ENCODE measurements at regions of chr5 and their contacts with region 1.

Region 1: GRCh38 chr5:17216176-17216973 is 1.1 kb upstream of the BASP1 start:
- DNase-seq: peak in 1 of 2 donors; percentile 84
- H3K4me3 ChIP-seq: peak overlapping the region; percentile 73 to 82
- H3K27ac ChIP-seq: peak overlapping the region; percentile 61 to 93
- H3K4me1 ChIP-seq: peaks cover 0 to 2% of the 10 kb centered on the region in 2 donors
- H3K27me3 ChIP-seq: no peaks in the 10 kb centered on the region
- CTCF ChIP-seq: peak; percentile 61 to 79 (median 65)

Region 2: DNA sequence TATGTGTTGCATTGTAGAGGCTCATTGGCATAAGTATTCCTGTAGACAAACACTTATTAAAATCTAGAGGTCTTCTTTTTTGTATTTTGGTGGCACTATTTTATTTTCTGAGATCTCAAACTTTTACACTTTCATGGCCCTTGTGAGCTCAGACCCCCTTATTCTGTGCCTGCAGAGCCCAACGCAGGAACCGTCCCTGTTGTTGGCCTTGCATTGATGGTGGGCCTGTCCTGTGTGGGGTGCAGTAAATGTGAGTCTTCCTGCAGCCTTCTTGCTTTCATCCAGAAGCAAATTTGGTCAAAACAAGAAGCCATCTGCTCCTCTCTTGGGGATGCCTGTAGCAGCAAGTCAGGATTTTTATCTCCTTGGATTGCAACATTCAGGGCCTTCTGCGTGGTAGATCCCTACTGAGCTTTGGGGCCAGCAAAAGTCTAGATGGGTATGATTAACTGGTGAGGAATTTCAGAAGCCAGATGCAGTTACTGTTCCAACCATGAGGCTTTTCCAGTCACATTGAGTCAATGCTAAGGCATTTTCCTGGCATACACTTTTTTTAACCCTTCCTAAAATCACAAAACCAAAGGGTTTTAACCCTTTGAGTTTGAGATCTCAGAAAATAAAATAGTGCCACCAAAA is 32.7 kb after region 1 on chr5:
- intact Hi-C with region 1: loop called (anchors 1 kb)
- DNase-seq: peak in 1 of 2 donors; percentile 75
- H3K4me3 ChIP-seq: no peak overlapping the region
- H3K27ac ChIP-seq: peak overlapping the region in 1 of 2 donors; percentile 9
- H3K4me1 ChIP-seq: peaks cover 0 to 5% of the 10 kb centered on the region in 2 donors
- H3K27me3 ChIP-seq: no peaks in the 10 kb centered on the region
- CTCF ChIP-seq: no peak

Region 3: GRCh38 chr5:17302602-17303001 is 86.2 kb after region 1 on chr5:
- intact Hi-C with region 1: loop called (anchors 2 kb)
- DNase-seq: peak in 1 of 2 donors; percentile 79
- H3K4me3 ChIP-seq: no peak overlapping the region
- H3K27ac ChIP-seq: peak overlapping the region; percentile 38 to 44
- H3K4me1 ChIP-seq: peaks cover 5 to 37% of the 10 kb centered on the region in 2 donors
- H3K27me3 ChIP-seq: no peaks in the 10 kb centered on the region
- CTCF ChIP-seq: no peak

Region 4: DNA sequence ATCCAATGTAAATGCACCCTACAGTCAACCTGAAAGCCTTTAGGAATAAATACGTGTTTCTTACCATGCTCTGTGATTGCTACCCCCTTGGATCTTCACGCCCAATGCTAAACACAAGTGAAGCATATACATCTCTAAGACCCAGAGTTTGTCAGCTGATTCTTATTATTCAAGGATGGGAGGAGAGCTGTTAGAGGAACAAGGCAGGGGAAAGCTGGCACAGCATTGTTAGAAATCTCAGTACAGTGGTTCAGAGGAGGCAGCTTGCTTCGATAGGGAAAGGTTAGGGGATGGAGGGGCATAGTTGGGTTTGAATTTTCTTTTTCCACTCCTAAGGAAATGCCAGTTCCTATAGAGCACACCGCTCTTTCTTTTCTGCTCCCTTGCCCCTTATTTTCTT is 265.0 kb after region 1 on chr5:
- intact Hi-C with region 1: loop called (anchors 10 kb)
- DNase-seq: no peak
- H3K4me3 ChIP-seq: no peak overlapping the region
- H3K27ac ChIP-seq: no peak overlapping the region
- H3K4me1 ChIP-seq: no peaks in the 10 kb centered on the region
- H3K27me3 ChIP-seq: no peaks in the 10 kb centered on the region
- CTCF ChIP-seq: no peak

Region 5: DNA sequence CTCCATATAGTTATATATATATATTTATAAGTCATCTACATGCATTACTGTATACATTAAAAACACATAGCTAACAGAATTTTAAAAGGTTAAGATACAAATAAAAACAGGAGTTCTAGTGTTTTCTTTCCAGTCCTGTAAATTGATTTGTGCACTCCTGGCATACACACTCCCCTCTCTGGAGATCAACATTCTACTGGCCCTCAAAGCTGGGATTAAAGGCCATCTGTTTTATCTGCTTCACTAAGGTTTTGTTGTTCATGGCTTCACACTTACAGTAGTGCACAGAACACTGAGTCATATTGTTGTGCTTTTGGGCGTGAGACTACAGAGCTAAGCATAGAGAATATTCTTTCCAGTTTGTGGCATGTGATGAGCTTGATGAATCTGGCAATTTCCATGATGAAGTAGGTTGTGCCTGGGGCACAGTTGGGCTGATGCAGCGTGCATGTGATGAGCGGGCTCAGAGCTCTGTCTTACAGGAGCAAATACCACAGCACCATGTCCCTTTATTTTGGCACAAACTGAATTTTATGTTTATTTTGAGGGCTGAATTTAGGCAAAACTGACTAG is 516.1 kb after region 1 on chr5:
- intact Hi-C with region 1: loop called (anchors 10 kb)
- DNase-seq: no peak
- H3K4me3 ChIP-seq: no peak overlapping the region
- H3K27ac ChIP-seq: no peak overlapping the region
- H3K4me1 ChIP-seq: no peaks in the 10 kb centered on the region
- H3K27me3 ChIP-seq: no peaks in the 10 kb centered on the region
- CTCF ChIP-seq: no peak

Region 6: DNA sequence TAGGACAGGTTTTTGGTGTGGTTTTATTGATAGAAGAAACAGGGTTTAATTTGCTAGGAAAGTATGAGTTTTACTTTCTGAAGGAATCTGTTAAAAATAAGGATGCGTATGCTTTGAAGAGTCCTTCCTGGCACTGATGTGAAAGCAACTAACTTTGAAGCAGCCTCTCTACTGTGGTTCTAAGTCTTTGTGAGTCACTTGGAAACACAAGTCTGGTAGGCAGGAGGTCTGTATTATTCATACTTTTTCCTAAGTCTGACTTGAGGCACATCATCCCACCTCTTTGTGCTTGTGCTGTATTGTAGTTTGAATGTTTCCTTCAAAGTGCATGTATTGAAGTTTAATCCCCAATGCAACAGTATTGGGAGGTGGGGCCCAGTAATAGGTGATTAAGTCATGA is 546.9 kb after region 1 on chr5:
- intact Hi-C with region 1: no loop called
- DNase-seq: no peak
- H3K4me3 ChIP-seq: no peak overlapping the region
- H3K27ac ChIP-seq: no peak overlapping the region
- H3K4me1 ChIP-seq: no peaks in the 10 kb centered on the region
- H3K27me3 ChIP-seq: no peaks in the 10 kb centered on the region
- CTCF ChIP-seq: no peak

Region 7: DNA sequence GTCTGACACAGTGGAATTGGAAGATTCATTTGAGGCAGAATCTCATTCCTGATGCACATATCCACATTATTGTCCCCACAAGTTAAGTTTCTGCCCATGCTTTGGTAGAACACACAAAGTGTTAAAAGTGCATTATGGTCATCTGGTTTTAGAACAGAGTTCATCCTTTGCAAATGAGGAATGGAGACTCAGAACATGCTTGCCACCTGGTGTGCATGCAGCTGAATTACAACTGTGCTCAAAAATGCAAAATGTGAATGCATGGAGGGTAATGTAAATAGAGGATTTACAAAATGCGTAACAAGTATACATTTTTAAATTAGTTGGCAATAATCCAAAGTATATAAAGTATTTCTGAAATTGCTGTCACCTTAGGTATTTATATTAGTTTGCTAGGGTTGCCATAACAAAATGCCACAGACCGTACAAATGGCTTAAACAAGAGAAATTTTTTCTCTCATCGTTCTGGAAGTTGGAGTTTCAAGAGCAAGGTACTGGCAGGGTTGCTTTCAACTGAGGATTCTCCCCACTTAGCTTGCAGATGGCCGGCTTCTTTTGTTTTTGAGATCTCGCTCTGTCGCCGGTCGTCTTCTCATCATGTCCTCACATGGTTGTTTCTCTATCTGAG is 1089.0 kb after region 1 on chr5:
- intact Hi-C with region 1: loop called (anchors 2 kb)
- DNase-seq: no peak
- H3K4me3 ChIP-seq: no peak overlapping the region
- H3K27ac ChIP-seq: no peak overlapping the region
- H3K4me1 ChIP-seq: no peaks in the 10 kb centered on the region
- H3K27me3 ChIP-seq: no peaks in the 10 kb centered on the region
- CTCF ChIP-seq: peak in 2 of 3 experiments; percentile 32 to 48

Measured in ascending aorta (tissue), 2 donors.